ENCODE measurements at regions of chr20 and their contacts with region 1.

Region 1: DNA sequence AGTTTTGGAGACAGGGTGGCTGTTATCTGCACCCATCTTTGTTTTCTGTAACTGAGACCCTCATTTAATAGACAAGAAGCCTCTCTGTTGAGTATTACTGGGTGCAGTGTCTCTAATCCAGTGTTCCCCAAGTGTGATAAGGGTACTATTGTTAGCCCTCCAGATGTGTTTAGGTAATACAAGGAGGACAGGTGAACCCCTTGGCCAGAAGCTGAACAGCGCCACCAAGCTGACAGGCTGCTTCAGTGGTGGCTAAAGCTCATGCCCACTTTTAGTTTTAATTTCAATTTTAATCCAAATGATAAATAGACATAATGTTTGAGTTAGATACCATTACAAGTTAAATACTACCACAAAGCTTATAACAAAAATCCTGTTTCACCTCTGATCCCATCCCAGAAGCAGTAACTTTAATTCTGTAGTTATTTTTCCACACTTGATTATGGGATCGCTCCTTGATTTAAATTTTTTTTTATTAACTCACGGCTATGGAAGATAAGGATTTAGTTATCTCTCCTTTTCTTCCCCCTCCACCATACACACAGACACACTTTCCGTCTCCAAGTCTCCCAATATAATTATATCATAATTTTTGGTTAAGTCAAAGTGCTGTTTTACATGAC is 8.4 kb upstream of the STK35 start:
- DNase-seq: no peak
- H3K4me3 Mint-ChIP-seq: no peak overlapping the region
- H3K27ac Mint-ChIP-seq: no peak overlapping the region
- H3K4me1 Mint-ChIP-seq: peaks cover 5% of the 10 kb centered on the region
- H3K27me3 Mint-ChIP-seq: peaks cover 32% of the 10 kb centered on the region

Region 2: GRCh38 chr20:1336699-1337367 is 756.4 kb before region 1 on chr20:
- intact Hi-C with region 1: no loop called
- DNase-seq: no peak
- H3K4me3 Mint-ChIP-seq: no peak overlapping the region
- H3K27ac Mint-ChIP-seq: peak overlapping the region; percentile 21
- H3K4me1 Mint-ChIP-seq: peaks cover 21% of the 10 kb centered on the region
- H3K27me3 Mint-ChIP-seq: no peaks in the 10 kb centered on the region

Region 3: GRCh38 chr20:1764136-1765033 is 328.9 kb before region 1 on chr20:
- intact Hi-C with region 1: loop called (anchors 2 kb)
- DNase-seq: peak; percentile 18
- H3K4me3 Mint-ChIP-seq: no peak overlapping the region
- H3K27ac Mint-ChIP-seq: no peak overlapping the region
- H3K4me1 Mint-ChIP-seq: no peaks in the 10 kb centered on the region
- H3K27me3 Mint-ChIP-seq: peaks cover 16% of the 10 kb centered on the region

Region 4: DNA sequence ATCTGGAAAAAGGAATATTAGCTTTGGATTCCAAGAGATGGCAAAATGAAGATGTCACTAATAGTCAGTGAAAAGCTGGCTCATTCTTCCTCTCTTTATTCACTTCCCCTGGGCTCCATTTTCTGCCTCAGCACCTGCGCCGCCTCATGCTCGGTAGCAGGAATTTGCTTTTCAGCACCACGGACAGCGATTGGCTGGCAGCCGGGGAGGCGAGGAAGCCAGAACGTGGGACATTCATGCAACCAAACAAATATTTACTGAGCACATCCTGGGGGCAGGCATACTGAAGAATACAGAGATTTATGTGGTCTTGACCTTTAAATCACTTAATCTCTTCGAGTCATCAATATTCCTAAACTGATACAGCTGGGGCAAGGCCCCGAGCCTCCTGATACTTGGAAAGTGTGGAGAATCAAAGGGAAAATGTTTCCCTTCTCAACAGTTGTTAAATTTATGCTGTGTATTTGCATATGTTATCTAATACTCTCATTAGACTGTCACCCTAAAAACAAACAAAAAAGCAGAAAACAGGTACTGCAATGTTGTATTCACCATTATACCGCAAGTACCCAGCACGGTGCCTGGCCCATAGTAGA is 87.3 kb before region 1 on chr20:
- intact Hi-C with region 1: loop called (anchors 5 kb)
- DNase-seq: peak; percentile 54
- H3K4me3 Mint-ChIP-seq: no peak overlapping the region
- H3K27ac Mint-ChIP-seq: no peak overlapping the region
- H3K4me1 Mint-ChIP-seq: no peaks in the 10 kb centered on the region
- H3K27me3 Mint-ChIP-seq: peaks cover 14% of the 10 kb centered on the region

Region 5: DNA sequence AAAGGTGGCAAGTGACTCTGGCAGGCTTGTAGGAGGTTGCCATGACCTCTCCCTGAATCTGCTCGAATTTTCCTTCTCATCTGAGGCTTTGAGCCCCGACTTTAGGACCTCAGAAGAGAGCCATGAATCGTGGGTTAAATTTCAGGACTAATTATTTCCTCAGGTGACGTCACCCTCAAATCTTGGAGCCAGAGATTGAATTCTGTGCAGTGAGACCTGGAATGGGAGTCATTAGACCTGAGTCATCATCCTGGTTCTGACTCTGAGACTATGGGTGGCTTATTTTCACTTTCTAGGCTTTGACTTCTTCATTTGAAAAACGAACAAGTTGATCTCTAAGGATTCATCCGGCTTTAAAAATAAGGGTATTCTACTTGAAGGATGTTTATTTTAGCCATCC is 50.9 kb before region 1 on chr20:
- intact Hi-C with region 1: no loop called
- DNase-seq: no peak
- H3K4me3 Mint-ChIP-seq: no peak overlapping the region
- H3K27ac Mint-ChIP-seq: no peak overlapping the region
- H3K4me1 Mint-ChIP-seq: no peaks in the 10 kb centered on the region
- H3K27me3 Mint-ChIP-seq: peaks cover 19% of the 10 kb centered on the region

Measured in activated T-helper 1 cell treated with anti-CD3 and anti-CD28 coated beads, Interleukin-12 subunit alpha, Interleukin-12 subunit beta, Interleukin-2, Interleukin-4 antibody, amounts not matched to agents 30 ng/mL and 10 ng/mL and 1 ng/mL, durations not matched to agents 14 hours and 24 hours and 36 hours (primary cell).